A549 (cell line): ENCODE measurements at regions of chr11 and their contacts with region 1.

Region 1: GRCh38 chr11:74726547-74727182 is 4.6 kb downstream of the CHRDL2 start:
- DNase-seq: peak; percentile 74 to 91
- ATAC-seq: peak; percentile 92 to 96
- H3K4me3 ChIP-seq: no peak overlapping the region
- H3K27ac ChIP-seq: peak overlapping the region; percentile 44 to 68; a peak in 4 of 6 replicates
- H3K4me1 ChIP-seq: peaks cover 15% of the 10 kb centered on the region
- CTCF ChIP-seq: peak; percentile 88
- EP300 ChIP-seq: no peak
- POLR2A ChIP-seq: no peak
- RAD21 ChIP-seq: peak; percentile 85 to 89

Region 2: DNA sequence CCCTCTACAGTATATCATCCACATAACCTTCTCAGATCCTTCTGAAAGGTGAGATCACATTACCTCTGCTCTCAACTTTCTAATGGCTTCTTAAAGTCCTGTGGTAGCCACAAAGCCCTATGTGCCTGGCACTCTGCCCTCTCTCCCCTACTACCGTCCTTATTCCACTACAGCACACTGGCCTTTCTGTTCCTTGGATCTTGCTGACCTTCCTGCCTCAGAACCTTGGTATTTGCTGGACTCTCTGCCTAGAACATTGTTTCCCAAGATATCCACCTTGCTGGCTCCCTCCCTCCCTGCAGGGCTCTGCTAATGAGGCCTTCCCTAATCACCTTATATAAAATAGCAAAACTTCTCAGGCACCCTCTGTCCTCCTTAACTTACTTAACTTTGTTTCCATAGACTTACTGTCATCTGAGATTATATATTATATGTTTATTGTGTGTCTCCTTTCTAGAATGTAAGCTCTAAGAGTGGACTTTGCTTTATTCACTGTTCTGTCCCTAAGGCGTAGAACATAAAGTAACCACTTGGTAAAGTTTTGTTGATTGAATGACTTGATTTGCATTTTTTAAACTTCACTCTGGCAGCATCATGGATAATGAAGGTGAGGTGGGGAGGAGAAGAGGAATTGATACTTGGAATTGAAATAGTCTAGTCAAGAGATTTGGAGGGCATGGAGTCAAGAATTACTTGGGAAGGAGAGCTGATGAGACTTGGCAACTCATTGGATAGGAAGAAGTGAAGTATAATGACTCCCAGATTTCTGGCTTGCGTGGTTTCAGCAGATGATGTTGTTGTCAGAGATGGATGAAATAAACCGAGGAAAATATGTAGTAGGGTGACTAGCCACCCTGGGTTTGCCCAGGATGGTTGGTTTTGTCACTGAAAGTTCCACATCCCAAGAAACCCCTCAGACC is 123.8 kb before region 1 on chr11:
- CTCF ChIA-PET with region 1: interaction called, 12 read pairs
- POLR2A ChIA-PET with region 1: no interaction called
- DNase-seq: no peak
- ATAC-seq: no peak
- H3K4me3 ChIP-seq: no peak overlapping the region
- H3K27ac ChIP-seq: no peak overlapping the region
- H3K4me1 ChIP-seq: no peaks in the 10 kb centered on the region
- CTCF ChIP-seq: no peak
- EP300 ChIP-seq: no peak
- POLR2A ChIP-seq: no peak
- RAD21 ChIP-seq: no peak

Region 3: GRCh38 chr11:74634537-74634936 is 92.1 kb before region 1 on chr11:
- CTCF ChIA-PET with region 1: interaction called, 122 read pairs
- POLR2A ChIA-PET with region 1: interaction called, 3 read pairs
- DNase-seq: peak; percentile 33 to 80
- ATAC-seq: peak; percentile 93 to 94
- H3K4me3 ChIP-seq: no peak overlapping the region
- H3K27ac ChIP-seq: peak overlapping the region; percentile 61 to 63
- H3K4me1 ChIP-seq: peaks cover 52% of the 10 kb centered on the region
- CTCF ChIP-seq: peak; percentile 61
- EP300 ChIP-seq: no peak
- POLR2A ChIP-seq: no peak
- RAD21 ChIP-seq: peak; percentile 69

Region 4: DNA sequence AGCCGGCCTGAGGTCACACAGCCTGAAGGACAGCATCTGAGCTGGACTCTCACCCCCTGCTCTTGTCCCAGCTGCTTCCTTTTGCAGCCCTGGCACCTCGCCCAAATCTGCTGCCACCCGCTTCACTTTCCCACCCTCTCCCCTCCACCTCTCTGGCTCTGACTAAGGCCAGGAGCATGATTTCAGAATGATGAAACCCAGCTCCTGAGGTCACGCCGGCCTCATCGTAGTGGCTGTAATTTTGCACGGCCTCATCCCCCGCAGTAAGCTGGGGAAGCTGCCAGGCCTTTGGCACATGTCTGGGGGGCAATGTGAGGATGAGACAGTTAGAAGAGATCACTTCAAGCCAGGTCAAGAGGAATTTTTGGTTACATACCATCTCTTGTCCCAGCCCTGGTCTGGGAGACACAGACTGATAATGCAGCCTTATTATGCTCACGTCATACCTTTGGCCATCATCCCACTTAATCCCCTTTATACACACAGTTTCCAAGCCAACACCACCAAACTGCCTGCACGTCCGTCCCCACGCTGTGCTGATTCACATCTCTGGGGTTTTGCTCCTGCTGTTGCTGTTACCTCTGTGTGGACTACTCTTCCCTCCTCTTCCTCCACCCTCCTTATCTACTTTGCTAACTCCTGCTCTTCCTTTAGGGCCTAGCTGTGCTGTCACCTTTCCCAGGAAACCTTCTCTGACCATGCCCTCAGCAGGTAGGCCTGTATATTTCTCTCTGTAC is 53.5 kb before region 1 on chr11:
- CTCF ChIA-PET with region 1: interaction called, 19 read pairs
- POLR2A ChIA-PET with region 1: no interaction called
- DNase-seq: peak; percentile 86 to 98
- ATAC-seq: peak; percentile 90 to 91
- H3K4me3 ChIP-seq: no peak overlapping the region
- H3K27ac ChIP-seq: peak overlapping the region; percentile 98 to 100
- H3K4me1 ChIP-seq: peaks cover 45% of the 10 kb centered on the region
- CTCF ChIP-seq: no peak
- EP300 ChIP-seq: peak; percentile 90 to 97
- POLR2A ChIP-seq: no peak
- RAD21 ChIP-seq: peak in 1 of 2 experiments; percentile 42; a peak in 4 of 5 replicates

Region 5: DNA sequence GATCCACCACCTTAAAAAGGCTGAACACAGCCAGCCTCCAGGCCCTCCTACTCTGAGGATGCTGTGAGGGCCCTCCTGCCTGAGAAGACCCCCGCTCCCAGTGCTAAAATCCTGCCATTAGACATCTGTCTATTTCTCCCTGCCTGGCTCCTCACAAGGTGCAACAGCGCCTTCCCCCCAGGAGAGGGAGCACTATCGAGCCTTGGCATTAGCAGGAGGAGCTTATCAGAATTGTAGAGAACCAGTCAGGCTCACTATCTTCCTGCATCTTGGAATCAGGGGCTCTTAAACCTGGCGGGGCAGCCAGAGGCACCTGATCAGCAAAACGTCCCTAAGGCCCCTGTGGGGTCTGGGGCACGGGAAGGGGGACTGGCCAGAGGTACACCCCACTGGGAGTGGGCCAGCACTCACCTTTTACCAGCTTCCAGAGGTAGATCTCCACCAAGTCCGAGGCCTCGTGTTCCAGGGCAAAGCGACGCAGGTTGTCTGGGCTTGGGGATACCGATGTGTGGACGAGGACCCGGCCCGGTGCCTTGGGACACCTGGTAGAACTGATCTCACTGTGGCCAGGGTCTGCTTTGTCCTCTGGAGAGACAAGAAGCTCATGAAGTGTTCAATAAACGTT is 24.2 kb before region 1 on chr11:
- CTCF ChIA-PET with region 1: interaction called, 241 read pairs
- POLR2A ChIA-PET with region 1: interaction called, 3 read pairs
- DNase-seq: peak; percentile 75 to 84
- ATAC-seq: peak; percentile 84 to 90
- H3K4me3 ChIP-seq: no peak overlapping the region
- H3K27ac ChIP-seq: peak overlapping the region; percentile 53 to 88; a peak in 5 of 6 replicates
- H3K4me1 ChIP-seq: peaks cover 21% of the 10 kb centered on the region
- CTCF ChIP-seq: peak; percentile 79
- EP300 ChIP-seq: no peak
- POLR2A ChIP-seq: no peak
- RAD21 ChIP-seq: peak; percentile 53 to 67

Region 6: GRCh38 chr11:74748211-74749127 is 21.8 kb after region 1 on chr11 and contains the start of gene RNF169:
- CTCF ChIA-PET with region 1: interaction called, 15 read pairs
- POLR2A ChIA-PET with region 1: no interaction called
- DNase-seq: peak; percentile 95 to 98
- ATAC-seq: peak; percentile 97 to 99
- H3K4me3 ChIP-seq: peak within 1 kb of the TSS; percentile 62
- H3K27ac ChIP-seq: peak within 1 kb of the TSS; percentile 83 to 97
- H3K4me1 ChIP-seq: peaks cover 31% of the 10 kb centered on the region
- CTCF ChIP-seq: no peak
- EP300 ChIP-seq: no peak
- POLR2A ChIP-seq: peak; percentile 68
- RAD21 ChIP-seq: no peak
- polyA plus RNA-seq, gene RNF169: 10.7 and 11.1 TPM in 2 replicates

Region 7: DNA sequence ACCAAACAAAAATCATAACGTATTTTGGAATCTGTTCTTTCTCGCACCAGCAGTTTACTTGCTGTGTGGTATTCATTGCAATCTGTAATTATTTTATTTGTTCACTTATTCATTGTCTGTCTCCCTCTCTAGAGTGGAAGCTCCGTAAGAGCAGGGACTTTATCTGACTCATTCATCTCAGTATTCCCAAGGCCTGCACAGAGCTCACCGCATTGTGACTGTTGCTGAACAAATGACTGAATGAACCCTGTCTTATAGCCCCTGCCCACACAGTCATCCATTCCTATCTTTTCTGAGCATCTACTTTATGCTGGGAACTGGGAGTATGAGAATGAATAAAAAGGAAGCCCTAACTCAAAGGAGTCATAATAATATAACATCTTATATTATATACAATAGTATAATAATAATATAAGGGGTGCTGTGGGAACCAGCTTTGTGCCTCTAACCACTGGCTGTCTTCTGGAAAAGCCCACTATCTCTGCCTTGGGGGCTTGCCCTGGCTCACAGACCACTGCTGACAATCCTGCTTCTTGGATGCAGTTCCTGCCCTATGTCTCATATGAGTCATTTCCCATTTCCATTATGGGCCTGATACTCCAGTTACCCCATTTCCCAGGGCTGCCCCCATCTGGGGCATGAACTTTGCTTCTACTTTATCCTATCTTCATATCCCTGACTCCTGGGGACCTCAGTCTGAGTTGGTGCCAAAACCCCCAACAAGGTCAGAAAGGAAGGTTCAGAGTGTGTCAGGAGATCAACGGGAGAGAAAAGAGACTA is 211.2 kb after region 1 on chr11:
- CTCF ChIA-PET with region 1: no interaction called
- POLR2A ChIA-PET with region 1: no interaction called
- DNase-seq: no peak
- ATAC-seq: no peak
- H3K4me3 ChIP-seq: no peak overlapping the region
- H3K27ac ChIP-seq: no peak overlapping the region
- H3K4me1 ChIP-seq: no peaks in the 10 kb centered on the region
- CTCF ChIP-seq: no peak
- EP300 ChIP-seq: no peak
- POLR2A ChIP-seq: no peak
- RAD21 ChIP-seq: no peak